Activated T-helper 1 cell treated with anti-CD3 and anti-CD28 coated beads, Interleukin-12 subunit alpha, Interleukin-12 subunit beta, Interleukin-2, Interleukin-4 antibody, amounts not matched to agents 30 ng/mL and 10 ng/mL and 1 ng/mL, durations not matched to agents 14 hours and 24 hours and 36 hours (primary cell): ENCODE measurements at regions of chr1 and their contacts with region 1.

Region 1: DNA sequence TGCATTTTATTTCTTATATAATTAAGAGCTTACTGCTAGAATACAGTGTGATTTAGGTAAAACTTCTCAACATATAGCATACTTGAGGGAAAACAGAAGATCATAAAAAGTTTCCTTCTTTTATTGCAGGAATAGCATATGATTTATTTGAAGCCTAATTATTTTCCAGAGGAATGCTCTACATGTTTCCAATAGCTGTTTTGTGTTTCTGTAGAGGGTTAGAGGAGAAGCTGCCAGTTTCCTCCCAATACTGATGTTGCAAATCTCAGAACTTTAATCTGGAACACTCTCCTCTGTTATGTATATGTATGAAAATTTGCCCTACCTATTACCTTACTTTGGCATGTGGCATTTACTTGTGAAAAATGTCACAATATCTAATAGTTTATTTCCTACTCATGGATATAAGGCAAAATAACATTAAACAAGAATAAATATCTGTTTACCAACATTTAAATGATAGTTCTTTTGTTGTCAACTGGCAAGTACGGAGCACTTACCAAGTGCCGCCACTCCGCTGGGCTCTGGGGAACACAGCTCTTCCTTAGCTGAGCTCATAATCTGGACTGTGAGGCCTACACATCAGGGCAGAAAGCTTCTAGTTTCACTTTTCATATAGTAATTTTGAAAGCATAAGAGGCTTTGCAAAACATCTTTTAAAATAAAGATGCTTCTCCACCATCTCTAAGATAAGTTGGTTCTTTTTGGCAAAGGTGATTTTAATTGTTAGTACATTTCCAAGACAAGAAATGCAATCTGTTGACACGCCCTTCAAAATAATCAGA is 239.8 kb upstream of the C1orf105 start:
- DNase-seq: peak; percentile 22
- H3K4me3 Mint-ChIP-seq: peak overlapping the region; percentile 75
- H3K27ac Mint-ChIP-seq: peak overlapping the region; percentile 94
- H3K4me1 Mint-ChIP-seq: peaks cover 50% of the 10 kb centered on the region
- H3K27me3 Mint-ChIP-seq: no peaks in the 10 kb centered on the region

Region 2: DNA sequence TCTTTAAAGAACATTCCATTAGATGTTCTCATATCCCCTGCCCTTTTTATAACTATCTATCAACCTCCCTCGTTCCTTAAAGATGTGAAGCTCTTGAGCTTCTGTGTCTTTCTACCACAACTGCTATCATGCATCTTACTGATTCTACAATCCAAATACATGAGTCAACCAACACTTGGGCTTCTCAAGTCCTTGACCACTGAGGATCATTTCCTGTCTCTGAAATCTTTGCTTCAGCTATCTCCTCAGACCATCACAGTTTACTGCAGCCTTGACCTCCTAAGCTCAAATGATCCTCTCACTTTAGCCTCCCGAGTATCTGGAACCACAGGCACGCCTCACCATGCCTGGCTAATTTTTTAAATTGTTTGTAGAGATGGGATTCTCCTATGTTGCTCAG is 791.5 kb before region 1 on chr1:
- intact Hi-C with region 1: no loop called
- DNase-seq: no peak
- H3K4me3 Mint-ChIP-seq: no peak overlapping the region
- H3K27ac Mint-ChIP-seq: no peak overlapping the region
- H3K4me1 Mint-ChIP-seq: no peaks in the 10 kb centered on the region
- H3K27me3 Mint-ChIP-seq: no peaks in the 10 kb centered on the region

Region 3: DNA sequence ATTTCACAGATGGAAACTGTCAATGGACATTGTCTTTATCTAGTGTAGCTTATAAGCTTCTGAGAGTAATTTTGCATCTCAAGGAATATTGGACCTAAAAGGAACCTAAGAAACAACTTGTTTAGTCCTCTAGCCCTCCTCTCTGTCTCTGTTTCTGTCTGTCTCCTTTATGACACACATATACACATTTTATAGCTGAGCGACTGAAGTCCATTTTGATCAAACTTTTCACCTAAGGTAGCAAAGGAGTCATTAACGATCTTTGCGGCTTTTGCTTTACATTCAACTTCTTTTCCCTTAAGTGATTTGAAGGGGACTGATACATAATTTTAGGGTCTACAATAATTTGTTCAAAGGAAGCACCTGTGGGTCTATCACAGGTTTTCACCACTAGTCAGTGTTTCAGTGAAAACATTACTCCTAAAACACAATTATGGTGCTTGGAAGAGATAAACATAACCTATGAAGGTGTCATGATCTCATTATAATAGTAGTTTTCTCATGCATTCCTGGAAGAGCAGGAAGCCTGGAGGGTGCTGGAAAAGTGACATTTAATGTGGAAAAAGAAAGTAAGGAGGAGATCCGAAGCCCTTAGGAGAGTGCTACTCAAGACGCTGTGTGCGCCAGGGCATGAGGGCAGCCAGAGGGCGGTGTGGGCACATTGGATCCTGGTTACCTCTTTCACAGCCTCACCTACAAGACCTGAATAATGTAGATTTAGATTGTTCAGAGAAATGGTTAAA is 90.8 kb before region 1 on chr1:
- intact Hi-C with region 1: loop called (anchors 5 kb)
- DNase-seq: peak; percentile 20
- H3K4me3 Mint-ChIP-seq: no peak overlapping the region
- H3K27ac Mint-ChIP-seq: peak overlapping the region; percentile 36
- H3K4me1 Mint-ChIP-seq: peaks cover 7% of the 10 kb centered on the region
- H3K27me3 Mint-ChIP-seq: no peaks in the 10 kb centered on the region

Region 4: DNA sequence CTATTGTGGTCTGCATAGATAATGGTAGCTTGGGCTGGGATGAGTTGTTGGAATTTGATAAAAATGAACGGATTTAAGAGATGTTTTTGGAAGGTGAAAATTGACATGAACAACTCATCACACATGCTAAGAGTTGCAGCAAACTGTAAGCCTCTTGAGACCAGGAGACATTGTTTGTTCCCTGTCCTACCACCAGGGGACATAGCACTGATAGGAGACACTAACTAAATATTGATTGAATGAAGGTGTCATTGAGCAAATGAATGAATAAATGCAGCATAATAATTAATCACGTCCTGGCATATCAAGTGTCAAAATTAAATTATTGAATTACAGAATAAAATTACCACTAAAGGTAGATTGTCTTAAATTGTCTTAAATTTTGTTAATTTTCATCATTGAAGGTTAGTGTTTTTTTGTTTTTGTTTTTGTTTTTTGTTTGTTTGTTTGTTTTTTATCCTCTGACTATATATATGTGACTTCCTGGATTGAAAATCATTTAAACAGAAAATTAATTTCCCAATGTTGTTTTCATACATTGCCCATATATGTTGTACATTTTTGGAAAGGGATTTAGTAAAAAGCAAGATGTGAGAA is 45.5 kb before region 1 on chr1:
- intact Hi-C with region 1: loop called (anchors 5 kb)
- DNase-seq: no peak
- H3K4me3 Mint-ChIP-seq: no peak overlapping the region
- H3K27ac Mint-ChIP-seq: no peak overlapping the region
- H3K4me1 Mint-ChIP-seq: peaks cover 19% of the 10 kb centered on the region
- H3K27me3 Mint-ChIP-seq: no peaks in the 10 kb centered on the region

Region 5: DNA sequence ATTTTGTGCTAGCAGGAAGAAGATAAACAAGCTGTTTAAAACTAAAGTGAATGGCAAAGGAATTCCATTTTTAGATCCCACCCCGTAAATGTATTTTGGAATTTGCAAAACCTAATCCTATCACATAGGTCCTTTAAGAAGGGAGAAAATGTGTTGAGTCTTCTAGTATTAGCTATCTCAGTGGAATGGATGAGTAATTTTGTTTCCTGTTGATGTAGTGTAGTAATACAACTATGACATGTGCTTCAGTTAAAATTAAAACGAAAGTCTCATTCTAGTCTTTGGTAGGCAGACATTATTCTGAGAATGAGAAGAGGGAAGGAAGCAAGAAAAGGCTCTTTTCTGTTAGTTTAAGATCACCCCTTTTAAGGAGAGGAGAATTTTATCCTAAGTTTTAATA is 26.1 kb before region 1 on chr1:
- intact Hi-C with region 1: loop called (anchors 1 kb)
- DNase-seq: no peak
- H3K4me3 Mint-ChIP-seq: peak overlapping the region; percentile 23
- H3K27ac Mint-ChIP-seq: peak overlapping the region; percentile 87
- H3K4me1 Mint-ChIP-seq: peaks cover 7% of the 10 kb centered on the region
- H3K27me3 Mint-ChIP-seq: peaks cover 3% of the 10 kb centered on the region

Region 6: DNA sequence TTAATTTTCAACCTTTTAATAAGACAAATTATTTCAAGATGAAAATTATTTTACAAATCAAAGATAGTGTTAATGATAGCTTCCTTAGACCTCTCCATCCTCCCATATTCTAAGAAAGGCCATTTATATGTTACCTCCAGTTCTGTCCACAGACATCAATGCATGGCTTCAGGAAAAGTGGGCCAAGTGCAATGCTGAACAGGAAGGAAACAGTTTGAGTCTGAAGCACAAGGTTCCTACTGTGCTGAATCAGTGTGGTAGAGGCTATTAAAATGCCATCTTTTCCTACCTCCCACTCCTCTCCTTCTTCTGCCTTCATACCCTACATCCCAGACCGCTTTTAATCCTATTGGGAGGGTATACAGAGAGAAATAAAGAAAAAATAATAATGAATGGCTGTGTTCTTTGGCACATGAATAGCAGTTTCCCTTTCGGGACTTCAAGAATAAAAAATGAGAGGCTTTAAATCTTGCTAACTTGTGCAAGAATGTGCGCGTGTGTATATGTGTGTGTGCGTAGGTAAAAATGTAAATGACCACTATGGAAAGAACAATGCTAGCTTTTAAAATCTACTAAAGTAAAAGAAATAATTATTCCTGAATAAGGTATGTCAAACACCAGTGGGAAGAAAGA is 177.2 kb after region 1 on chr1:
- intact Hi-C with region 1: loop called (anchors 1 kb)
- DNase-seq: no peak
- H3K4me3 Mint-ChIP-seq: peak overlapping the region; percentile 6
- H3K27ac Mint-ChIP-seq: peak overlapping the region; percentile 83
- H3K4me1 Mint-ChIP-seq: peaks cover 56% of the 10 kb centered on the region
- H3K27me3 Mint-ChIP-seq: no peaks in the 10 kb centered on the region

Region 7: DNA sequence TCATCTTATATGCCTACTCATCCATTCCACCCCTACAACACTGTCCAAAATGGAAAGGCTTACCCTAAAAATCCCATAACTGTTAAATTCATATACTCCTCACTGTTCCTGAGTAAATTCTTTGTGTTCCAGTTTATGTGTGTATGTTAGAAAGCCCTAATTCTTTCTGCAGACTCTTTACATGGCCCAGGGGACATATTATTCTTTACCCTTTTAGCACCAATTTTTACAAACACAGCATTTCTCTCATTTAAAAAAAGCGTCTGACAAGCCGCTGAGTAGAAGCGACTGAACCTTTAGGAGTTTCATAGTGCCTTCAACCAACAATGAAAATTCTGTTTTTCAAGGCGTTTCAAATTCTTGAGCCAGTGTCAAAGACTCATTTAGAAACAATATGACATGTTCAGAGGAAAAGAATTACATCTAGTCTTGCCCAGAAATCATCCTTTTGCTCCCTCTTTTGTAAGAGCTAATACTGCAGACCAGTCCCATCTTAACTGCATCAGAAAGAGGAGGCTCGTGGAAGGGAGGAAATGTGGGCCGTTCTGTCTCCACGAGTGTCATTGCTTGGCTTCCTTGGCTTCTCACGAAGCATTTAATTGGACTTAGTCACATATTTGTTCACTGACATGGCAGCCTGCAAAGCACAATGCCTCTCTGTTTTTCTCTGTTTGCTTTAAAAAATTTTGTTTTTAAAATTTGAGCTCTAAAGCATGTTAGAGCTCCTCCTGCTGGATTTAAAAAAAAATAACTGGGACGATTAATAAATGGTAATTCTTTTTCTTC is 218.5 kb after region 1 on chr1:
- intact Hi-C with region 1: loop called (anchors 1 kb)
- DNase-seq: no peak
- H3K4me3 Mint-ChIP-seq: no peak overlapping the region
- H3K27ac Mint-ChIP-seq: peak overlapping the region; percentile 4
- H3K4me1 Mint-ChIP-seq: peaks cover 52% of the 10 kb centered on the region
- H3K27me3 Mint-ChIP-seq: no peaks in the 10 kb centered on the region

Region 8: DNA sequence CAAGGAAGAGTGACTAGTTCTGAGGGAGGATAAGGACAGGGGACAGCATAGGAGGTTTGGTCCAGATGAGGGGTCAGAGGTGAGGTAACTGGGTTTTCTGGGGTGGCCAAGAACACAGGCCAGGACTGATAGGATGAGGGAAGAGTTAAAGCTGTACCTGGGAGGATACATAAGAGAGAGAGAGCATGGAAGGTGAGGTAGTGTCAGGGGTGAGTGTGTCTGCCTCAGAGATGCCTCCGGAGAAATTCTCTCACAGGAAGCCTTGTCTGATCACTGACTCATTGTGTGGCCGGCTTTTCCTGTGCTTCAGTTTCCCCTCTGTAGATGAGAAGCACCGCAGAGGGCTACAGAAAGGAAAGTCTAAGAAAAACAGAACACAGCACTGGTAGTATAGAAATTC is 518.4 kb after region 1 on chr1:
- intact Hi-C with region 1: loop called (anchors 1 kb)
- DNase-seq: peak; percentile 72
- H3K4me3 Mint-ChIP-seq: peak overlapping the region; percentile 62
- H3K27ac Mint-ChIP-seq: peak overlapping the region; percentile 88
- H3K4me1 Mint-ChIP-seq: no peaks in the 10 kb centered on the region
- H3K27me3 Mint-ChIP-seq: no peaks in the 10 kb centered on the region